Heart right ventricle (tissue), 16 donors: ENCODE measurements at regions of chr19 and their contacts with region 1.

Region 1: GRCh38 chr19:12666265-12667048 is at the starts of genes MAN2B1 and WDR83:
- DNase-seq: peak; percentile 76 to 78
- ATAC-seq: peak; percentile 83 to 90 (median 88)
- H3K4me3 ChIP-seq: peak within 1 kb of the TSS; percentile 65 to 99 (median 89)
- H3K27ac ChIP-seq: peak within 1 kb of the TSS in 9 of 10 donors; percentile 68 to 91 (median 80)
- H3K4me1 ChIP-seq: peaks cover 17 to 51% (median 41%) of the 10 kb centered on the region in 9 donors
- H3K27me3 ChIP-seq: no peaks in the 10 kb centered on the region
- CTCF ChIP-seq: peak in 1 of 9 donors; percentile 4
- total RNA-seq, gene MAN2B1: 14.2 to 89.9 (median 25.5) TPM
- total RNA-seq, gene WDR83: 5.5 to 10.7 (median 7.9) TPM

Region 2: DNA sequence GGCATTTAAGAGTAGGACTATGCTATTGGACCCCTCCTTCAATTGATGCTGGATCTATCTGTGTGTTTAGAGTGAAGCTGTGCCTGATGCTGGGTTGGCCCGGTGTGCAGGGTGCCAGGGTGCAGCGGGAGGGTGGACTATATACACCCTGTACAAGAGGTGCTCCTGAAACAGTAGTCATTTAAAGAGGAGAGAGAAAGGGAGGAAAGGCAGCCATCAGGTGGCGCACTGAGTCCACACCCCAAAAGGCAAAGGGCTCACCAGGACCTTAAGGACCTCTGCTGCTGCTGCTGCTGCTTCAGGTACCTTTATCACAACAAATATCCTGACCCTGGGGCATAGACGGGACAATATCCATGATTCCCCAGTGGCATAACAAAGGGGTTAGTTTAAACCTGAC is 464.2 kb before region 1 on chr19:
- intact Hi-C with region 1: loop called in 1 of 10 experiments (anchors 10 kb)
- DNase-seq: peak; percentile 16 to 29
- ATAC-seq: peak in 5 of 8 donors; percentile 39 to 72 (median 64)
- H3K4me3 ChIP-seq: no peak overlapping the region
- H3K27ac ChIP-seq: no peak overlapping the region
- H3K4me1 ChIP-seq: no peaks in the 10 kb centered on the region
- H3K27me3 ChIP-seq: no peaks in the 10 kb centered on the region
- CTCF ChIP-seq: peak in 7 of 9 donors; percentile 32 to 54 (median 44)

Region 3: DNA sequence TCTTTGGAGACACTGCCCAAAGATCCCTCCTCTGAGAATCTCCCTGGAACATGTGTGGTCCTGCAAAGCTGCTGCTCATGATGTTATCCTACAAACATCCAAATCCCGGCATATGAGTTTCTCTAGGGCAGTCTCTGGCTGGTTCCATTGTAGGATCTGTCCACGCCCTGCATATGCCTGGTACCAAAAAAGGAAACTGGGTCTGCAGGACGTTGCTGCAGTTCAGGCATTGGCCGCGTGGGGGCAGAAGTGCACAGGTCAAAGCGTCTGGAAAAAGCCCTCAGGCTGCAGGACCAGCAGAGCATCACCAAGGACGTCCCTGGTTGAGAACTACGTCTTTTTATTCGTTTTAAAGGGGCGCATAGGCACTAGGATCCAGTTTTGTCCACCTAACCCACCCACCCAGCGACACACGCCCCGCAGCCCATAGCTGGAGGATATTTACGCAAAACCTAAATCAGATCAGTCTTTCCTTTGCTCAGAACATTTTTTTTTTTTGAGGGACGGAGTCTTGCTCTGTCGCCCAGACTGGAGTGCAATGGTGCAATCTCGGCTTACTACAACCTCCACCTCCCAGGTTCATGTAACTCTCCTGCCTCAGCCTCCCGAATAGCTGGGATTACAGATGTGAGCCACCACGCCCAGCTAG is 102.3 kb before region 1 on chr19:
- intact Hi-C with region 1: loop called in 7 of 10 experiments (anchors 5 to 10 kb)
- DNase-seq: peak; percentile 89 to 91
- ATAC-seq: peak; percentile 89 to 94 (median 92)
- H3K4me3 ChIP-seq: no peak overlapping the region
- H3K27ac ChIP-seq: no peak overlapping the region
- H3K4me1 ChIP-seq: peaks cover 0 to 8% (median 0%) of the 10 kb centered on the region in 9 donors
- H3K27me3 ChIP-seq: no peaks in the 10 kb centered on the region
- CTCF ChIP-seq: peak; percentile 89 to 98 (median 97)